HepG2 (cell line): ENCODE measurements at regions of chr11 and their contacts with region 1.

Region 1: DNA sequence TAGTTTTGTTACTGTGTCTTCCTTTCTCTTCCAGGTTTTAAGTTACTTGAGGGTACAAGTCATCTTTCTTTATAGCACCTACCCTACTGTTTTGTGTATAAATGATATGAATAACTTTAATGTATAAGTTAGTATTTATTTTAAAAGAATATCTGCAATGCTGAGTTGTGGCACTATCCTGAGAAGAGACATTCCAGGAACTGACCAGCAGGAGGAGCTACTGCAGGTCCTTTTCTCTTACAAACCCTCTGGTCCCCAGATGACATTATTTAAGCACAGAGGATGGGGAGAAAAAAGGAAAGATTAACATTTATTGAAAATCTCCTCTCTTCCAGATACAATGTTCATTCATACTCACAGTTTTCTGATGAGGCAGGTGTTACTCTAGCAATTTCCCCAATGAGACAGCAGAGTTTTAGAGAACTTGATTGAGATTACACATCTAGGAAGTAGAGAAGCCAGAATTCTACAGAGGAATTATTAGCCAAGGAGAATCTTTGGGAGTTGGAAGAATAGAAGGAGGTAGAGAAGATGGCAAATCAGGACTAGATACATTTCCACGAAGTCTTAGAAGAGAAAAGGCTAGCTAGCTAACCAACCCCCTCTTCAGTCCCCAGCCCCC is 541.2 kb upstream of the API5 start:
- DNase-seq: peak; percentile 30
- ATAC-seq: peak; percentile 69
- H3K4me3 ChIP-seq: no peak overlapping the region
- H3K27ac ChIP-seq: no peak overlapping the region
- H3K4me1 ChIP-seq: no peaks in the 10 kb centered on the region
- H3K27me3 ChIP-seq: no peaks in the 10 kb centered on the region
- CTCF ChIP-seq: peak; percentile 64
- EP300 ChIP-seq: no peak
- POLR2A ChIP-seq: no peak
- RAD21 ChIP-seq: peak; percentile 34; the same call in 1 of the 2 replicates

Region 2: GRCh38 chr11:42923651-42924050 is 153.1 kb after region 1 on chr11:
- CTCF ChIA-PET with region 1: no interaction called
- POLR2A ChIA-PET with region 1: no interaction called
- in situ Hi-C with region 1: no loop called
- intact Hi-C with region 1: no loop called
- DNase-seq: no peak
- ATAC-seq: no peak
- H3K4me3 ChIP-seq: no peak overlapping the region
- H3K27ac ChIP-seq: no peak overlapping the region
- H3K4me1 ChIP-seq: no peaks in the 10 kb centered on the region
- H3K27me3 ChIP-seq: no peaks in the 10 kb centered on the region
- CTCF ChIP-seq: no peak
- EP300 ChIP-seq: no peak
- POLR2A ChIP-seq: no peak
- RAD21 ChIP-seq: no peak

Region 3: DNA sequence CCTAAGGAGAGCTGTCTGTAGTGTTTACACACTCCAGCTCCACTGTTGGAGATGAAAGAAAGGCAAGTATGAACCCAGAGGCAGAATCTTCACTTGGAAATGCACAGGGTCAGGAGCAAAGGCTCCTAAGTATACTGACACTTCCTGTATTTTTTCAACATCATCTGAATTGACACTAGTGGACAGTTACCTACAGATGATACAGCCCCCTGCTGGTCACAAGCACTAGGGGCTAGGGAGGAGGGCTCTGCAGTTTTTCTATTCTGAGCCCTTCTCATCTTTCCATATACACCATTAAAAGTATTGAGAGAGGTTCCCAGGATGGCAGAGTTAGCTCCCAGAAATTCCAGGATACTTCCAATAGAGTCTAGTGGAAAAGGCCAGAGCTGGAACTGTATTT is 250.9 kb after region 1 on chr11:
- CTCF ChIA-PET with region 1: interaction called, 9 read pairs
- POLR2A ChIA-PET with region 1: no interaction called
- in situ Hi-C with region 1: loop called (anchors 25 kb)
- intact Hi-C with region 1: loop called (anchors 1 kb)
- DNase-seq: peak; percentile 13
- ATAC-seq: peak; percentile 96
- H3K4me3 ChIP-seq: no peak overlapping the region
- H3K27ac ChIP-seq: no peak overlapping the region
- H3K4me1 ChIP-seq: no peaks in the 10 kb centered on the region
- H3K27me3 ChIP-seq: no peaks in the 10 kb centered on the region
- CTCF ChIP-seq: peak; percentile 22; the same call in 1 of the 2 replicates
- EP300 ChIP-seq: no peak
- POLR2A ChIP-seq: no peak
- RAD21 ChIP-seq: no peak

Region 4: DNA sequence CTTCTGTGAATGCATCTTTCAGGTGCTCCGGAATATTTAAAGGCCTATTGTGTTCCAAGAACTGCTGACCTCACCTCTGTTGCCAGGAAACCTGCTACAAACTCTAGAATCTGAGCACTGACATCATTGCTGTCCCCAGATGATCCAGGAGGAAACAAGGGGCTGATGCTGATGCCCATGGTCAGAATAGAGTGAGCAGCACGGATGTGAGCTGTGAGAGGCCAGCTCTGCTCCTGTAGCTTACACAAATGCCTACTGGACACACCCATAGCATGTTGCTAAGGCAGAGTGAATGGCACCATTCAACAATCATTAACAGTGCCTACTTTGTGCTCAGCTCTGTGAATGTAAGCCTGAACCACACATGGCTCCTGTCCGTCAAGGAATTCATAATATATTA is 264.5 kb after region 1 on chr11:
- CTCF ChIA-PET with region 1: no interaction called
- POLR2A ChIA-PET with region 1: no interaction called
- in situ Hi-C with region 1: loop called (anchors 25 kb)
- intact Hi-C with region 1: no loop called
- DNase-seq: no peak
- ATAC-seq: no peak
- H3K4me3 ChIP-seq: no peak overlapping the region
- H3K27ac ChIP-seq: no peak overlapping the region
- H3K4me1 ChIP-seq: no peaks in the 10 kb centered on the region
- H3K27me3 ChIP-seq: no peaks in the 10 kb centered on the region
- CTCF ChIP-seq: no peak
- EP300 ChIP-seq: no peak
- POLR2A ChIP-seq: no peak
- RAD21 ChIP-seq: no peak

Region 5: GRCh38 chr11:43282607-43283440 is 512.3 kb after region 1 on chr11:
- CTCF ChIA-PET with region 1: interaction called, 10 read pairs
- POLR2A ChIA-PET with region 1: no interaction called
- in situ Hi-C with region 1: loop called (anchors 5 kb)
- intact Hi-C with region 1: loop called (anchors 1 kb)
- DNase-seq: peak; percentile 9
- ATAC-seq: peak; percentile 83
- H3K4me3 ChIP-seq: no peak overlapping the region; a peak in 1 of 6 replicates
- H3K27ac ChIP-seq: no peak overlapping the region
- H3K4me1 ChIP-seq: peaks cover 6% of the 10 kb centered on the region; the same call in 1 of the 2 replicates
- H3K27me3 ChIP-seq: peaks cover 0 to 2% of the 10 kb centered on the region in 2 experiments; a peak in 1 of 5 replicates
- CTCF ChIP-seq: peak; percentile 80
- EP300 ChIP-seq: no peak
- POLR2A ChIP-seq: no peak
- RAD21 ChIP-seq: peak; percentile 42; the same call in 1 of the 2 replicates